Mammary epithelial cell (primary cell): ENCODE measurements at regions of chr1 and their contacts with region 1.

Region 1: DNA sequence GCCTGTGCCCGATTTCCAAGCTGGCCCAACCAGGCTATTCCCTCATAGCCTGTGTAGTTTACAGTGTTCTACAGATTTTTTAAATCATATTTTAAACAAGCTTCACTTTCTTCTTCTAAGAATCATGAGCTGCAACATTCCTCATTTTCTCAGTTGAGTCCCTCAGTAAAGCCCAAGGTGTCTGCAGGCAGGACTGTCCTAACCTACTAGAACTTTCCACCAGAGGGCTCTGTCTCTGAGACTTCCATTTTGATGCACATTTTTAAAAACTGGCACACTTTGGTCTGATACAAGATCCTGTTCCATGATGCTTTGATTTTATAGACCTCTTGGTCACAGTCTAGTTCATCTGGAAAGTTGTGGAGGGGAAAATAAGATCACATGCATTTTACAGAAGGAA is 21.6 kb upstream of the SLAMF6 start:
- DNase-seq: no peak
- H3K4me3 ChIP-seq: no peak overlapping the region
- H3K27ac ChIP-seq: no peak overlapping the region
- H3K4me1 ChIP-seq: peaks cover 7% of the 10 kb centered on the region
- H3K27me3 ChIP-seq: no peaks in the 10 kb centered on the region
- CTCF ChIP-seq: peak; percentile 43 to 46

Region 2: DNA sequence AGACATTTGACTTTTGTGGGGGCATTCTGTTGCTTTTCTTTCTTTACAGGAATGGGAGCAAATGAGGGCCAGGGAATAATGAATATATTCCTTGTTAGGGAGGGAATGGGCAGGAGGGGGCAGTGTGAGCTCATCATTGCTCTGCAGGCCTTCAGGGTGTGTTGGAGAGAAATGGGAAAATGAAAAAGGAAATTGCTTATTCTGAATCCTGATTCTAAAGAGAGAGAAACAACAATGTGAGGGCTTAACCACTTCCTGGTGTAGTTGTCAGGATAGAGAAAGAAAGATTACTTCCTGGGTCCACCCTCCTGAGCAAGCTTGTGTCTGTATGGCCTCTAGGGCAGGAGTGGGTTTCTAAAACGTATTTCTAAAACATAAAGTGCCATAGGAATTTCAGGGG is 116.0 kb before region 1 on chr1:
- CTCF ChIA-PET with region 1: no interaction called
- dilution Hi-C with region 1: no loop called
- in situ Hi-C with region 1: no loop called
- intact Hi-C with region 1: loop called (anchors 1 kb)
- DNase-seq: peak; percentile 31
- H3K4me3 ChIP-seq: no peak overlapping the region
- H3K27ac ChIP-seq: no peak overlapping the region
- H3K4me1 ChIP-seq: no peaks in the 10 kb centered on the region
- H3K27me3 ChIP-seq: peaks cover 3% of the 10 kb centered on the region
- CTCF ChIP-seq: peak; percentile 42 to 63

Region 3: GRCh38 chr1:160494620-160495019 is 50.0 kb before region 1 on chr1:
- CTCF ChIA-PET with region 1: no interaction called
- dilution Hi-C with region 1: no loop called
- in situ Hi-C with region 1: no loop called
- intact Hi-C with region 1: no loop called
- DNase-seq: no peak
- H3K4me3 ChIP-seq: no peak overlapping the region
- H3K27ac ChIP-seq: no peak overlapping the region
- H3K4me1 ChIP-seq: no peaks in the 10 kb centered on the region
- H3K27me3 ChIP-seq: no peaks in the 10 kb centered on the region
- CTCF ChIP-seq: peak; percentile 20 to 45